ENCODE measurements at regions of chr11 and their contacts with region 1.

Region 1: DNA sequence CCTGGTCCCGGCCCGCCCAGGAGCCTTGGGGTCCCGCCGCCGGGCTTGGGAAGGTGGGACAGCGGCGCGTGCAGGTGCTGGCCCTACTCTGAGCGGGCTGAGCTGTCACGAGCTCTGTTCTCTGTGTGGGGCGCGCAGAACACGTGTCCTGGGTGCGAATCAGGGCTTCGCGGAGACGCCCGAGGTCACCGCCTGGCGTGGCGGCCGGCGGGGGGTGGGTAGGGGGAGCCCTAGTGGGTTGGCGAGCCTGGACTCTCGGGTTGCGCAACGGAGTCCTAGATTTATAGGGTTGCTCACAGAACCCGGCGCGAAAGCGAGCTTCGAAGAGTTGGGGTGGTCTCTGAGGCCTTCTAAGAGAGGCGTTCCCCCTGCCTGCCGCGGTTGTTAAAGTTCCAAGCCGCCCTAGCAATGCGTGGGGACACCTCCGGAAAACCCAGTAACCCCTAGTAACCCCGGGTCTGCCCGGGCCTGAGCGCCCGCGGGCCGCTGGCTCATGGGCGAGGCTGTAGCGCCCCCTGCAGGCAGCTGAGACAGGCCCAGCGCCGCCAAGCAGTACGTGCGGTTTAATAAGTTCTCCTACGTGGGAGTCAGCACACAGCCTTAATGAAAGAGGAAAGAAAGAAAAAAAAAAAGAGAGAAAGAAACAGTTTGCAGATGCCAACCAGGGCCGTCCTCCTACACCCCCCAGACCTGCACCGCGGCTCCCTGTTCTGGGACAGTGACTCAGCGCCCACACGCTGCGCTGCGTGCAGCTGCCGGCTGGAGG is 2.8 kb downstream of the ADM start:
- DNase-seq: peak; percentile 73 to 85 (median 81)
- H3K4me3 ChIP-seq: peak overlapping the region; percentile 93
- H3K4me3 Mint-ChIP-seq: peak overlapping the region; percentile 97 to 100 (median 99)
- H3K27ac ChIP-seq: no peak overlapping the region
- H3K27ac Mint-ChIP-seq: peak overlapping the region in 7 of 8 donors; percentile 8 to 80 (median 40)
- H3K4me1 ChIP-seq: peaks cover 48% of the 10 kb centered on the region
- H3K4me1 Mint-ChIP-seq: peaks cover 34 to 47% (median 46%) of the 10 kb centered on the region in 3 donors
- H3K27me3 ChIP-seq: peaks cover 40% of the 10 kb centered on the region
- H3K27me3 Mint-ChIP-seq: peaks cover 18 to 25% of the 10 kb centered on the region in 2 donors

Region 2: DNA sequence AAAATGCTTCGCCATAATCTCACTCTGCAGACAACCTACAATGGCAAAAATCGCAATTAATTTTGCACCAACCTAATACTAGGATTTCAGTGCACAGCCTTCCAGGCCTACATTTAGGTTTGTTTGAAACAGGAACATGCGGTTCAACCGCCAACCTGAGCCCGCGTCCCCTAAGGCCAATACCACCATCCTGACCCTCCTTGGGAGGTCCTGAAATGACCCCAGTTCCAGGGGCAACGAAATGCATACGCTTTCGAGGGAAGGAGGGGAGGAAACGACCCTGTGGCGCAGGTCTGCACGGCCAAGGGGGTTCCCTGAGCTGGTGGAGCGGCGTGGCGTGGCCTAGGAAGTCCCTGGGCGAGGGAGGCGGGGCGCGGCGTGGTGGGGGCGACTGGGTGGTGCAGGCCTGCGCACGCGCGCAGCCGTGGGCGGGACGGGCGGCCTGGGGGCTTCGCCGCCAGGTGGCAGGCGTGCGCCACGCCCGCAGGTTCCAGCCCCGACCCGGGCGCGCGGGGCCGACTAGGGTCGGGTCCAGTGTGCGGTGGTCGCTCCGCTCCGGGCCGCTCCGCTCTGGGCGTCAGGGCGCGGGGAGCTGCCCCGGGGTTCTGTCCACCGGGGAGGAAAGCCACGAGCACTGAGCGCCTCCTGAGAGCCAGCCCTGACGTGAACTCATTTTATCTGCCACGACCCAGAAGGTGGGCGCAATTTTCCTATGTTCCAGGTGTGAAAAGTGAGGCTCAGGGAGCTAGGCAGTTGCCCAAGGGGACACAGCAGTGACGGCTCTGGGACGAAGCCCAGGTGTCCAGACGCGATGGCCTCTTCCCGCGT is 549.6 kb before region 1 on chr11:
- CTCF ChIA-PET with region 1: interaction called, 61 read pairs
- POLR2A ChIA-PET with region 1: interaction called, 6 read pairs
- DNase-seq: peak; percentile 89 to 94 (median 91)
- H3K4me3 ChIP-seq: peak overlapping the region; percentile 83
- H3K4me3 Mint-ChIP-seq: peak overlapping the region; percentile 80 to 90 (median 85)
- H3K27ac ChIP-seq: peak overlapping the region; percentile 51
- H3K27ac Mint-ChIP-seq: peak overlapping the region; percentile 65 to 94 (median 89)
- H3K4me1 ChIP-seq: peaks cover 14% of the 10 kb centered on the region
- H3K4me1 Mint-ChIP-seq: peaks cover 19 to 30% (median 24%) of the 10 kb centered on the region in 3 donors
- H3K27me3 ChIP-seq: no peaks in the 10 kb centered on the region
- H3K27me3 Mint-ChIP-seq: peaks cover 0 to 2% of the 10 kb centered on the region in 2 donors

Region 3: DNA sequence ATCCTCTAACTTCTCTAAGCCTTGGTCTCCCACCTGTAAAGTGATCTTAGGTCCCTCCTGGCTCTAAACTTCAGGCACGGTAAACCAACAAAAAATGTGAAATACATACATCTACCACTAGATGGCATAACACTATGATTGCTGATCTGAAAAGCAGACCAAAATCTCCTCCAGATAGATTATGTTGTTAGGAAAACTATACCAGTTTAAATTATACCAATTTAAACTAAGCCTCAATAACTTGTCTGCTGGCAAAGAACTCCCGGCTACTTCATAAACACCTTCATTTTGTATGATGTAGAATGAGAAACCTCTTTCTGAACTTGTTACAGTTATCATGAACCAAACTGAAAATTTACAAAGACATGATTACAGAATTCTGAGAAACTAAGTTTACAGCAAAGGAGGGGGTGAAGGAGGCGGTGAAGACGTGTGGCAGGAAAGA is 99.5 kb before region 1 on chr11:
- CTCF ChIA-PET with region 1: interaction called, 115 read pairs
- POLR2A ChIA-PET with region 1: interaction called, 7 read pairs
- DNase-seq: peak in 2 of 5 donors; percentile 31 to 43
- H3K4me3 ChIP-seq: no peak overlapping the region
- H3K4me3 Mint-ChIP-seq: no peak overlapping the region
- H3K27ac ChIP-seq: no peak overlapping the region
- H3K27ac Mint-ChIP-seq: no peak overlapping the region
- H3K4me1 ChIP-seq: no peaks in the 10 kb centered on the region
- H3K4me1 Mint-ChIP-seq: no peaks in the 10 kb centered on the region
- H3K27me3 ChIP-seq: no peaks in the 10 kb centered on the region
- H3K27me3 Mint-ChIP-seq: peaks cover 0 to 1% of the 10 kb centered on the region in 2 donors

Region 4: GRCh38 chr11:10285148-10285802 is 22.4 kb before region 1 on chr11:
- CTCF ChIA-PET with region 1: interaction called, 11 read pairs
- POLR2A ChIA-PET with region 1: interaction called, 6 read pairs
- DNase-seq: no peak
- H3K4me3 ChIP-seq: no peak overlapping the region
- H3K4me3 Mint-ChIP-seq: no peak overlapping the region
- H3K27ac ChIP-seq: no peak overlapping the region
- H3K27ac Mint-ChIP-seq: no peak overlapping the region
- H3K4me1 ChIP-seq: no peaks in the 10 kb centered on the region
- H3K4me1 Mint-ChIP-seq: peaks cover 0 to 14% (median 8%) of the 10 kb centered on the region in 3 donors
- H3K27me3 ChIP-seq: no peaks in the 10 kb centered on the region
- H3K27me3 Mint-ChIP-seq: peaks cover 0 to 5% of the 10 kb centered on the region in 2 donors

Region 5: GRCh38 chr11:10326012-10326964 is 18.7 kb after region 1 on chr11:
- CTCF ChIA-PET with region 1: interaction called, 12 read pairs
- POLR2A ChIA-PET with region 1: no interaction called
- DNase-seq: no peak
- H3K4me3 ChIP-seq: no peak overlapping the region
- H3K4me3 Mint-ChIP-seq: no peak overlapping the region
- H3K27ac ChIP-seq: no peak overlapping the region
- H3K27ac Mint-ChIP-seq: no peak overlapping the region
- H3K4me1 ChIP-seq: no peaks in the 10 kb centered on the region
- H3K4me1 Mint-ChIP-seq: peaks cover 0 to 4% (median 0%) of the 10 kb centered on the region in 3 donors
- H3K27me3 ChIP-seq: peaks cover 4% of the 10 kb centered on the region
- H3K27me3 Mint-ChIP-seq: peaks cover 10 to 23% of the 10 kb centered on the region in 2 donors

Region 6: DNA sequence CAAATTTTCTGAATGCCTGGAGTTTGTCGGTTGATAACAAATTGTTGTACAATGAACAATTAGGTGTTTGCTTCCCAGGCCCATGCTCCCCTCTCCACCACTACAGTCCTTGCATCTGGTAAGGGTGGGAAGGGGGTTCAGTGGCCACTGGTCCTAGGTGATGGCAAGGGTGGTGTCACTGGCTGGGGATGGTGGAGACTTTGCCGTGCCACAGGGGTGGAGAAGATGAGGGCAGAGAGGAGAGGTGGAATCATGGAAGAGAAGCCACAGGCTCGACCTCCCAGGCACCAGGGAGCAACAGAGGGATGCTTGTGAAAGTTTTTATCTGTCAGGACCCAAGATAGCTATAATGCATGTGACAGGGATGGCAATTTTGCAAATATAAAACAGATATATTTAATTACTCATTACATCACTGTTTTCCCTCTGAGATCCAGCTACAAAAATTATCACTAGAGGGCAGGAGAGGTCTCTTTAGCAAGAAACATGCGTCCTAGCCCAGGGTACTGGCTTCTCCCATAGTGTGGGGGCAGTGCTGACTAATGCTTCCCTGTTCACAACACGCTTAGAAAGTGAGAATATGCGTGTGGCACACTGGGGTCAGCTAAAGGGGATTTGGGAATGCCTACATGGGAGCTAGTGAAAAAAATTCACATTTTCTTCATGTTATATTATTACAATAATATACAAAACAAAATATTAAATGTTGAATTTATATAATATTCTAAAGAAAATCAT is 98.4 kb after region 1 on chr11:
- CTCF ChIA-PET with region 1: no interaction called
- POLR2A ChIA-PET with region 1: no interaction called
- DNase-seq: peak in 4 of 5 donors; percentile 6 to 58 (median 42)
- H3K4me3 ChIP-seq: no peak overlapping the region
- H3K4me3 Mint-ChIP-seq: no peak overlapping the region
- H3K27ac ChIP-seq: no peak overlapping the region
- H3K27ac Mint-ChIP-seq: peak overlapping the region in 2 of 8 donors; percentile 70 to 84
- H3K4me1 ChIP-seq: peaks cover 10% of the 10 kb centered on the region
- H3K4me1 Mint-ChIP-seq: peaks cover 10 to 17% (median 14%) of the 10 kb centered on the region in 3 donors
- H3K27me3 ChIP-seq: no peaks in the 10 kb centered on the region
- H3K27me3 Mint-ChIP-seq: no peaks in the 10 kb centered on the region